ENCODE measurements at regions of chr11 and their contacts with region 1.

Region 1: DNA sequence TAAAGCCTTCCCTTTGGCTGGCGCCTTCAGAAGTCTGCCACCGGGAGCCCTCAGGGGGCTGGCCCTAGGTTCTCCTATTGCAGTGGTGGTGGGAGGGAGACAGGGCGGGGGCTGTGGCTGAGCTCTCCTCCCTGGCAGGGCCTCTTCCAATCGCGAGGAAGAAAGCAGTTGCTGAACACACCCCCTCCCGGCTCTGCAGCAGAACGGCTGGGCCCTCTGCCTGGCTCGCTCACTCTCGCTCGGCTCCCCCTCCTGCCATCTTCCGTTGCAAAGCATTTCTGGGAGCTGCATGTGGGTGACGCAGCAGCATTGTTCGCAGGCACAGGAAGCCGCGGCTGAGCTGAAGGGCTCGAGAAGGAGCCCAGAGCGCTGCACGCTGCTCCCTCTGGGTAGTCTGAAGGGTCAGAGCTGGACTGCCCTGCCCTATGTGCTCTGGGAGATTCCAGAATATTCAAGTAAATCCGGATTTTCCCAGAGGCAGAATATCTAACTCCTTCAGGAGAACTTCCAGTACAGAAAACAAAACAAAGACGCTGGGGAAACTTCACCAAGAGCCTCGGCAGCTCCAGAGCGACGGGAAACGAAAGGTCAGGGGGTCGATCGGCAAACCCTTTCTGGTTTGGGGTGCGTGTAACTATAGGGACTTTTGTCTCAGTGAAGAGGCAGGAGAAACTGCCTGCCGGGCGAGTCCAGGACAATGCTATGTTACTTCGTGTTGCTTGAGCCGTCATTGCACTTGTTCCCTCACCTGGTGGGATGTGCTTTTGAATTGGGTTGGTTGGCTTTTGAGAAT is 26.3 kb upstream of the GRK2 start:
- DNase-seq: peak; percentile 97
- H3K4me3 ChIP-seq: peak overlapping the region; percentile 94
- H3K27ac ChIP-seq: peak overlapping the region; percentile 96
- H3K27me3 ChIP-seq: no peaks in the 10 kb centered on the region
- CTCF ChIP-seq: peak; percentile 19; the same call in 1 of the 2 replicates

Region 2: GRCh38 chr11:66842896-66843775 is 396.8 kb before region 1 on chr11 and contains the start of gene RCE1:
- CTCF ChIA-PET with region 1: no interaction called
- POLR2A ChIA-PET with region 1: no interaction called
- DNase-seq: peak; percentile 52
- H3K4me3 ChIP-seq: peak within 1 kb of the TSS; percentile 100
- H3K27ac ChIP-seq: peak within 1 kb of the TSS; percentile 96
- H3K27me3 ChIP-seq: no peaks in the 10 kb centered on the region
- CTCF ChIP-seq: no peak
- polyA plus RNA-seq, gene RCE1: 9.2 and 11.4 TPM in 2 replicates

Region 3: DNA sequence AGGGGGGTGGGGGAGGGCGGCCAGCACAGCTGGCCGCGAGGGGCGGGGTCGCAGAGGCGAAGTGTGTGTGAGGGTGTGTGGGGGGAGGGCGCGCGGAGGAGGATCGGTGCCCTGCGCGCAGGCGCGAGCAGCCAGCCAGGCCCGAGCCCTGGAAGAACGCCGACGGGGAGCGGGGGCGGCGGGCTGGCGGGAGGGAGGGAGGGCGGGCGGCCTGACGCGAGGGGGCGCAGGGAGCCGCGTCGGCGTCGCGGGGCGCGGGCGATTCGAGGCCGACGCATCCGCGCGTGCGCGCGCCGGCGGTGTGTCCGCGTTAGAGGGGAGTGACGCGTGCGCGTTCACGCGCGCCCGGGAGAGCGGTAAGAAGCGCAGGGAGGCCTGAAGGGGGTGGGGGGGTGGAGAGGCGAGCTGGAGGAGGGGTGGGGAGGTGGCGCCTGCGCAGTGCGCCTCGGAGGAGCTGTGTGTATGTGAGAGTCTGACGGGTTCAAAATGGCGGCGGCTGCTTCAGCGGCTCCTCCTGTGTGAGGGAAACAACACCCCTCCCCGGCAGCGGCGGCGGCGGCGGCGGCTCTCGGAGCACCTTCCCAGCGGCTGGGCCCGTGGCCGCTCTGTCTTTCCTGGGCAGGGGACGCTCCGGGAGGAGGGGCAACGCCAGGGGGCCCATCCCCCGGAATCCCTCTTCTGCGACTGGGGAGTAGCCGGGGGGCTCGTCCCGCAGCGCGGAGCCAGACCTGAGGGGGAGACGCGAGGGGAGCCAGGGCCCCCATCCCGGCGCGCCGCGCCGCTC is 121.0 kb before region 1 on chr11 and contains the start of gene KDM2A:
- CTCF ChIA-PET with region 1: no interaction called
- POLR2A ChIA-PET with region 1: interaction called, 12 read pairs
- DNase-seq: peak; percentile 98
- H3K4me3 ChIP-seq: peak within 1 kb of the TSS; percentile 95
- H3K27ac ChIP-seq: peak within 1 kb of the TSS; percentile 68
- H3K27me3 ChIP-seq: no peaks in the 10 kb centered on the region
- CTCF ChIP-seq: no peak
- polyA plus RNA-seq, gene KDM2A: 52.2 and 53.0 TPM in 2 replicates

Region 4: GRCh38 chr11:67252831-67253239 is 12.9 kb after region 1 on chr11:
- CTCF ChIA-PET with region 1: no interaction called
- POLR2A ChIA-PET with region 1: interaction called, 10 read pairs
- DNase-seq: no peak
- H3K4me3 ChIP-seq: no peak overlapping the region
- H3K27ac ChIP-seq: no peak overlapping the region
- H3K27me3 ChIP-seq: no peaks in the 10 kb centered on the region
- CTCF ChIP-seq: peak; percentile 41

Measured in AG04450 (cell line).